ENCODE measurements at regions of chr14 and their contacts with region 1.

Region 1: GRCh38 chr14:24241829-24242443 is 487 bp downstream of the TINF2 start:
- DNase-seq: no peak
- ATAC-seq: peak; percentile 90
- H3K4me3 ChIP-seq: peak overlapping the region; percentile 80
- H3K27ac ChIP-seq: peak overlapping the region; percentile 99
- H3K4me1 ChIP-seq: peaks cover 16% of the 10 kb centered on the region
- H3K27me3 ChIP-seq: no peaks in the 10 kb centered on the region
- CTCF ChIP-seq: peak; percentile 17 to 52 (median 19); a peak in 3 of 6 replicates
- EP300 ChIP-seq: no peak
- POLR2A ChIP-seq: no peak
- RAD21 ChIP-seq: no peak

Region 2: DNA sequence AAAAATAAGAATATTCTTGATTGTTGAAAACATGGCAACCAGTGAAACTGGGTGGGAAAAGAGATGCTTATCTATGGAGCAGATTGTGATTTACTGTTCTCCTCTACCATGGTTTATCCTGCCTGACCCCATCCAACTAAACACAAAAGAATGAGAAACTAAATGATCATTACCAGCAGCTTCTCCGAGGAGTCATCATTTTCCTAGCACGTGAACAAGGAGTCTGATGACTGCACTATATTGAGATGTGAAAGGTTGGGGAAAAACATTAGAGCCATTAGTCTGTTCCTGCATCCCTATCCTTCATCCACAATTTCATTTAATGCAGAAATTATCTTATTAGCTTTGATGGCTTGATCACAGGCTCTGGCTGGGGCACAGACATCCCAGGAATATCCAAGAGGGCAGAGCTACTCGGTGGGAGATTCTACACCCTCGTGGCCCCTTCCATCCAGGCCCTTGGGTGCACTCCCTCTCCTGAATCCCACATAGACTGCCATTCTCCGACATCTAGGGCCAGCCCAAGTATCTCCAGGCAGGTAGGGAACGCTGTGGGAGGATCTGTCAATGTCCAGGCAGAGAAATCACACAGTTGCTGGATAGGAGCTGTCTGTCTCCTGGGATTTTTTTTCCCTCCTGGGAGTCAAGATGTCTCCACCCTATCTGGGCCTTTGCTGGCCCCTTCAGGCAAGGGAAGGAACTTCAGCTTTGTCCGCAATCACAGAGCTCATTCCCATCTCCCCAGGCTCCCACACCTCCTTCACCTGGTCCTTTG is 331.6 kb before region 1 on chr14:
- CTCF ChIA-PET with region 1: no interaction called
- POLR2A ChIA-PET with region 1: no interaction called
- RAD21 ChIA-PET with region 1: no interaction called
- SMC1A ChIA-PET with region 1: no interaction called
- in situ Hi-C with region 1: no loop called
- intact Hi-C with region 1: no loop called
- DNase-seq: no peak
- ATAC-seq: peak; percentile 84
- H3K4me3 ChIP-seq: no peak overlapping the region
- H3K27ac ChIP-seq: no peak overlapping the region
- H3K4me1 ChIP-seq: no peaks in the 10 kb centered on the region
- H3K27me3 ChIP-seq: peaks cover 0 to 2% of the 10 kb centered on the region in 2 experiments; a peak in 2 of 4 replicates
- CTCF ChIP-seq: peak; percentile 81 to 82 (median 81)
- EP300 ChIP-seq: no peak
- POLR2A ChIP-seq: no peak
- RAD21 ChIP-seq: peak; percentile 84

Region 3: DNA sequence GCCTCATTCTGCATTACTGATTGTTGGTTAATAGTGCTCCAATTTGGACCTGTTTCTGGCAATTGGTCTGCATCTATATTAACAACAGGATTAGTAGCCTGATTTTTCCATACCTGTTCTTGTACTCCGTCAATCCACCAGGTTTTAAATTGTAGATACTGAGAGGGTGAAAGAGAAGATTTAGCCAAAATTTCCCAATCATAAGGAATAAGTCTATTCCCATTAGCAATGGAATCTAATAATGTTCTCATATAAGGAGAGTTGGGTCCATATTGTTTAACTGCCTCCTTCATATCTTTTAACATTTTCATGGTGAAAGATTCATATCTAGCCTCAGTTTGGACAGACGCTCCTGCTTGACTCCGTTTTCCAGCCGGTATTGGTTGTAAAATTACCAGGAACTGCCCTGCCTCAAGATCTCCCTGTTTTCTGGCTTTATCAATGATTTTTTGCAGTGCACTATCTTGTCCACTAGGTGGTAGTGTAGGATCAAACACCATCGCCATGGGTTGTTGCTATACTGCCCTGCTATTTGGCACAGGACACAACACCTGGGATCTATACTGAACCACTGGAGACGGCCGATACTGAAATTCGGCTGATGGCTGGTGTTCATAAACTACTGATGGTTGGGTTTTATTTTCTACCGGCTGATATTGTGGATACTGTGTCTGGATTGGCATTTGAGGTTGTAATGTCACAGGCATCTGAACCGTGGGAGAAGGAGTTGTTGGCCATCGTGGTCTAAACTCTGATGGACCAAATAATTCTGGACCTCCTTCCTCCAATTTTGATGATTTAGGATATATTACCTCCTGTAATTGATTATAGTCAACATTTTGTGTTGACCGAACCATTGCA is 228.1 kb before region 1 on chr14:
- CTCF ChIA-PET with region 1: interaction called, 3 read pairs
- POLR2A ChIA-PET with region 1: no interaction called
- RAD21 ChIA-PET with region 1: no interaction called
- SMC1A ChIA-PET with region 1: no interaction called
- in situ Hi-C with region 1: no loop called
- intact Hi-C with region 1: loop called (anchors 1 kb)
- DNase-seq: peak; percentile 57
- ATAC-seq: peak; percentile 96
- H3K4me3 ChIP-seq: no peak overlapping the region
- H3K27ac ChIP-seq: no peak overlapping the region
- H3K4me1 ChIP-seq: no peaks in the 10 kb centered on the region
- H3K27me3 ChIP-seq: no peaks in the 10 kb centered on the region
- CTCF ChIP-seq: peak; percentile 77 to 91 (median 81)
- EP300 ChIP-seq: no peak
- POLR2A ChIP-seq: no peak
- RAD21 ChIP-seq: peak; percentile 97

Region 4: DNA sequence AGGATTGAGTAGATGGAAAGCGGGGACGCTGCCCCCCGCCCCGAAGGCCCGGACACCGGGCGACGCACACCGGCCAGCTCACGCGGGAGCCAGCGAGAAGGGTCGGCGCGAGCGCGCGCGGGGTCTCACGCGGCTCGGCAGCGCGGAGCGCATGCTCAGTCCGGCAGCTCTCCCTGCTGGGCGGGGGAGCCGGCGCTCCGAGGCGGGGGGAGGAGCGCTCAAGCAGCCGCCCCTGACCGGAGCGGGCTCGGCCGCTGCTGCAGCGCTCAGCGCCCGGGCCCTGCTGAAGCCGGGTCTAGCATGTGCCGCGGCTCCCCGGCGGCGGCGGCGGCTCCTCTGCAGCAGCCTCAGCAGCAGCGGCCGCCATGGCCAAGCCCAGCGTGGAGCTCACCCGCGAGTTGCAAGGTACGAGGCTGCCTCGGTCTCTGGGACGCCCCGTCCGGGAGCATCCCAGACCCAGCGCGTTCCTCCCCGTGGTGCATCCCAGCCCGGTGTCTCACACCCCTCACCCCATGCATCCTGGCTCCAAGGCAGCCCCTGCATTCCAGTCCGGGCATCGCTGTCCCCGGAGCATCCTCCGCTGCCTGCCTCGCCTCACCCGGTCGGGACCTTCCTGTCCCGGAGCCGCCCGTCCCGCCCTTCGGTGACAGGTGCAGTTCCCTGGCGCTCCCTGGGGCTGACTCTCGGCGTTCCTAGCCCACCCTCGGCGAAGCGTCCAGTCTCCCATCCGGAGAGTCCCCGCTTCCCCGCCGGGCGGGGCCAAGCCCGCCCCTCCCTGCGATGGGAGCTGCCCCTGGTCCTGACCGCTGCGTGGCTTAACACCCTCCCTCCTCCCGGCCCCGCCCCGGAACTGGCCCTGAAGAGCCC is 189.9 kb before region 1 on chr14 and contains the start of gene CARMIL3:
- CTCF ChIA-PET with region 1: no interaction called
- POLR2A ChIA-PET with region 1: no interaction called
- RAD21 ChIA-PET with region 1: no interaction called
- SMC1A ChIA-PET with region 1: no interaction called
- in situ Hi-C with region 1: no loop called
- intact Hi-C with region 1: no loop called
- DNase-seq: no peak
- ATAC-seq: peak; percentile 93
- H3K4me3 ChIP-seq: peak within 1 kb of the TSS; percentile 74
- H3K27ac ChIP-seq: peak within 1 kb of the TSS; percentile 31; the same call in 1 of the 2 replicates
- H3K4me1 ChIP-seq: peaks cover 23% of the 10 kb centered on the region
- H3K27me3 ChIP-seq: peaks cover 0 to 3% of the 10 kb centered on the region in 2 experiments; a peak in 1 of 4 replicates
- CTCF ChIP-seq: no peak
- EP300 ChIP-seq: no peak
- POLR2A ChIP-seq: peak; percentile 50; the same call in 1 of the 2 replicates
- RAD21 ChIP-seq: no peak
- polyA plus RNA-seq, gene CARMIL3: not detected

Region 5: GRCh38 chr14:24146978-24147760 is 94.8 kb before region 1 on chr14 and contains the start of gene RNF31:
- CTCF ChIA-PET with region 1: interaction called, 3 read pairs
- POLR2A ChIA-PET with region 1: interaction called, 12 read pairs
- RAD21 ChIA-PET with region 1: interaction called, 9 read pairs
- SMC1A ChIA-PET with region 1: interaction called, 8 read pairs
- in situ Hi-C with region 1: no loop called
- intact Hi-C with region 1: no loop called
- DNase-seq: peak; percentile 92
- ATAC-seq: peak; percentile 93
- H3K4me3 ChIP-seq: peak within 1 kb of the TSS; percentile 82
- H3K27ac ChIP-seq: peak within 1 kb of the TSS; percentile 94
- H3K4me1 ChIP-seq: peaks cover 11% of the 10 kb centered on the region
- H3K27me3 ChIP-seq: no peaks in the 10 kb centered on the region
- CTCF ChIP-seq: no peak
- EP300 ChIP-seq: no peak
- POLR2A ChIP-seq: peak; percentile 28
- RAD21 ChIP-seq: no peak
- polyA plus RNA-seq, gene RNF31: 8.5 to 19.0 TPM

Region 6: DNA sequence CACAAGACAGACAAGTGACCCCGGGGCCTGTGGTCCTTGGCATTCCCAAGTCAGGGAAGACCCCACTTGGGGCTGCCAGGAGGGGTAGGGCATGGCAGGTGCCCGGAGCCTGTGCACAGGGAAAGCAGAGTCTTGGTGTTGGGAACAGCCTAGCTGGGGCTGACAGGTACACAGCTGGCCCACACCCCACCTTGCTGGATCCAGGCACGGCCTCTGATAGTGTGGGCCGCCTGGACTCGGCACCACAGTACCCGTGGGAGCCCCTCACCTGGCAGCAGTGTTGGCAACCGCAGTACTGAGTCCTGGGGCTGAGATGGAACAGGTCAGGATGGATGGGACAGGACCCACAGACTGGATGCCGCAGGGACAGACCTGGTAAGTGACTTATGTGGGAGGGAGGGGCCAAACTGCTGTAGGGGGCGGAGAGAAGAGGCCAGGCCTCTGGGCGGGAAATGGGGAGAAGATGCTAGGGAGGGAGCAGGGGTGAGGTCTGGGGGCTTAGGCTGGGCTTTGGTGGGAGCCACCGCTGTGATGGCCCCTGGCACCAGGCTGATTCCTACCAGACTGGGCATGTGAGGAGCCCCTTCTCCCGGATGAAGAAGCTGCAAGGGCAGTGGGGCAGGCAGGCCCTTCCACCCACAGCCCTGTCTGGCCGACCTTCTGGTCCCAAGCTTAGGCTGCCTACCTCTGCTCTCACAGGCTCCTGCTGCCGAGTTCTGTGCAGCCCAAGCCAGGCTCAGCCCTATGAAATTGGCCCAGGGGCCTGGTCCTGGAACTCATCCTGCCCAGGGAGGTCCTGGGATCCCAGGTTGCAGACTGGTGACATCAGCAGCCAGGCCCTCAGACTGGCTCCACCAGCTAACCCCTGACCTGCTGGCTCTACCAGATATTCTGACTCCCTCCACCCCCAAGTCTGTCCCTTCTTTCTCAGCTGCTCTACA is 21.2 kb after region 1 on chr14 and contains the start of gene TGM1:
- CTCF ChIA-PET with region 1: interaction called, 10 read pairs
- POLR2A ChIA-PET with region 1: interaction called, 171 read pairs
- RAD21 ChIA-PET with region 1: interaction called, 8 read pairs
- SMC1A ChIA-PET with region 1: interaction called, 14 read pairs
- in situ Hi-C with region 1: no loop called
- intact Hi-C with region 1: no loop called
- DNase-seq: no peak
- ATAC-seq: peak; percentile 36
- H3K4me3 ChIP-seq: no peak within 1 kb of the TSS
- H3K27ac ChIP-seq: no peak within 1 kb of the TSS
- H3K4me1 ChIP-seq: no peaks in the 10 kb centered on the region
- H3K27me3 ChIP-seq: no peaks in the 10 kb centered on the region
- CTCF ChIP-seq: no peak
- EP300 ChIP-seq: no peak
- POLR2A ChIP-seq: no peak
- RAD21 ChIP-seq: no peak
- polyA plus RNA-seq, gene TGM1: 0.05 to 0.18 TPM

Region 7: GRCh38 chr14:24289649-24290249 is 47.8 kb after region 1 on chr14:
- CTCF ChIA-PET with region 1: interaction called, 368 read pairs
- POLR2A ChIA-PET with region 1: interaction called, 118 read pairs
- RAD21 ChIA-PET with region 1: interaction called, 231 read pairs
- SMC1A ChIA-PET with region 1: interaction called, 201 read pairs
- in situ Hi-C with region 1: no loop called
- intact Hi-C with region 1: no loop called
- DNase-seq: no peak
- ATAC-seq: peak; percentile 95
- H3K4me3 ChIP-seq: no peak overlapping the region
- H3K27ac ChIP-seq: 0 out of 2 replicates have a peak overlapping the region, but pooled peaks have one; percentile 24
- H3K4me1 ChIP-seq: peaks cover 11% of the 10 kb centered on the region
- H3K27me3 ChIP-seq: no peaks in the 10 kb centered on the region
- CTCF ChIP-seq: no peak
- EP300 ChIP-seq: no peak
- POLR2A ChIP-seq: no peak
- RAD21 ChIP-seq: no peak

Region 8: GRCh38 chr14:24332268-24332993 is 90.5 kb after region 1 on chr14:
- CTCF ChIA-PET with region 1: interaction called, 26 read pairs
- POLR2A ChIA-PET with region 1: no interaction called
- RAD21 ChIA-PET with region 1: interaction called, 11 read pairs
- SMC1A ChIA-PET with region 1: interaction called, 3 read pairs
- in situ Hi-C with region 1: no loop called
- intact Hi-C with region 1: loop called (anchors 1 kb)
- DNase-seq: peak; percentile 60
- ATAC-seq: peak; percentile 88
- H3K4me3 ChIP-seq: peak overlapping the region; percentile 35; the same call in 1 of the 2 replicates
- H3K27ac ChIP-seq: no peak overlapping the region
- H3K4me1 ChIP-seq: peaks cover 18% of the 10 kb centered on the region
- H3K27me3 ChIP-seq: peaks cover 2 to 12% of the 10 kb centered on the region in 2 experiments; a peak in 3 of 4 replicates
- CTCF ChIP-seq: peak; percentile 80 to 86 (median 85)
- EP300 ChIP-seq: no peak
- POLR2A ChIP-seq: no peak
- RAD21 ChIP-seq: peak; percentile 73

Measured in GM12878 (cell line).